ENCODE measurements at regions of chr1 and their contacts with region 1.

Region 1: GRCh38 chr1:92968138-92969032 is 7.1 kb upstream of the DIPK1A start:
- DNase-seq: peak in 4 of 5 donors; percentile 41 to 50 (median 46)
- H3K4me3 ChIP-seq: no peak overlapping the region
- H3K4me3 Mint-ChIP-seq: peak overlapping the region in 1 of 8 donors; percentile 57
- H3K27ac ChIP-seq: no peak overlapping the region
- H3K27ac Mint-ChIP-seq: peak overlapping the region; percentile 6 to 82 (median 49)
- H3K4me1 ChIP-seq: peaks cover 56% of the 10 kb centered on the region
- H3K4me1 Mint-ChIP-seq: peaks cover 16 to 32% (median 23%) of the 10 kb centered on the region in 4 donors
- H3K27me3 ChIP-seq: no peaks in the 10 kb centered on the region
- H3K27me3 Mint-ChIP-seq: no peaks in the 10 kb centered on the region

Region 2: DNA sequence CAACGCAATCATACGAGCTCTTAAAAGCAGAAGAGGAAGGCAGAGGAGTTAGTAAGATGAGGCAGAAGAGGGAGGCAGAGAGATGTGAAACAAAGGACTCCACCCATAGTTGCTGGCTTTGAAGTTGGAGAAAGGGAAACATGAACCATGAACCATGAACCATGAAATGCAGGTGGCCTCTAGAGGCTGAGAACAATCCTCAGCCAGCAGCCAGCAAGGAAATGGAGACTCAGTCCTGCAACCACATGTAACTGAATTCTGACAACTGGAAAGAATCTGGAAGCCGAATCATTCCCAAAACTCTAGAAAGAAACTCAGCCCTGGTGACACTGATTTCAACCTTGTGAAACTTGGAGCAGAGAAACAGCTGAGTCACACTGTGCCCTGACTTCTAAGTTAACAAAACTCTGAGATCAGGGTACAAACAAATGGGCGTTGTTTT is 17.2 kb before region 1 on chr1:
- CTCF ChIA-PET with region 1: interaction called, 52 read pairs
- POLR2A ChIA-PET with region 1: interaction called, 48 read pairs
- intact Hi-C with region 1: no loop called
- DNase-seq: peak in 4 of 5 donors; percentile 33 to 47 (median 39)
- H3K4me3 ChIP-seq: no peak overlapping the region
- H3K4me3 Mint-ChIP-seq: no peak overlapping the region
- H3K27ac ChIP-seq: peak overlapping the region; percentile 23
- H3K27ac Mint-ChIP-seq: no peak overlapping the region
- H3K4me1 ChIP-seq: peaks cover 59% of the 10 kb centered on the region
- H3K4me1 Mint-ChIP-seq: peaks cover 27 to 47% (median 31%) of the 10 kb centered on the region in 4 donors
- H3K27me3 ChIP-seq: no peaks in the 10 kb centered on the region
- H3K27me3 Mint-ChIP-seq: no peaks in the 10 kb centered on the region

Region 3: GRCh38 chr1:92980732-92981647 is 12.6 kb after region 1 on chr1:
- CTCF ChIA-PET with region 1: interaction called, 81 read pairs
- POLR2A ChIA-PET with region 1: interaction called, 244 read pairs
- intact Hi-C with region 1: loop called (anchors 1 kb)
- DNase-seq: peak; percentile 81 to 91 (median 87)
- H3K4me3 ChIP-seq: no peak overlapping the region
- H3K4me3 Mint-ChIP-seq: peak overlapping the region; percentile 32 to 86 (median 72)
- H3K27ac ChIP-seq: peak overlapping the region; percentile 77
- H3K27ac Mint-ChIP-seq: peak overlapping the region; percentile 88 to 99 (median 99)
- H3K4me1 ChIP-seq: peaks cover 58% of the 10 kb centered on the region
- H3K4me1 Mint-ChIP-seq: peaks cover 23 to 43% (median 35%) of the 10 kb centered on the region in 4 donors
- H3K27me3 ChIP-seq: no peaks in the 10 kb centered on the region
- H3K27me3 Mint-ChIP-seq: no peaks in the 10 kb centered on the region

Region 4: DNA sequence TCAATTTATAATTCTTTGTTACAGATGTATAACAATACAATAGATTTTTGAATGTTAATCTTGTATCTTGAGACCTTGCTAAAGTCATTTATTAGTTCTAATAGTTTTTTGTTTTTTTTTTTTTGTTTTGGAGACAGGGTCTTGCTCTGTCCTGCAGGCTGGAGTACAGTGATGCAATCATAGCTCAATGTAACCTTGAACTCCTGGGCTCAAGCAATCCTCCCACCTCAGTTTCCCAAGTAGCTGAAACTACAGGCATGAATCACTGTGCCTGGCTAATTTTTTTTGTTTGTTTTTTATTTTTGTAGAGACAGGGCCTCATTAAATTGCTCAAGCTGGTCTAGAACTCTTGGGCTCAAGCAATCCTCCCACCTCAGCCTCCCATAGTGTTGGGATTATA is 19.1 kb after region 1 on chr1:
- CTCF ChIA-PET with region 1: interaction called, 433 read pairs
- POLR2A ChIA-PET with region 1: interaction called, 244 read pairs
- intact Hi-C with region 1: no loop called
- DNase-seq: no peak
- H3K4me3 ChIP-seq: no peak overlapping the region
- H3K4me3 Mint-ChIP-seq: no peak overlapping the region
- H3K27ac ChIP-seq: no peak overlapping the region
- H3K27ac Mint-ChIP-seq: no peak overlapping the region
- H3K4me1 ChIP-seq: peaks cover 41% of the 10 kb centered on the region
- H3K4me1 Mint-ChIP-seq: peaks cover 31 to 40% (median 33%) of the 10 kb centered on the region in 4 donors
- H3K27me3 ChIP-seq: no peaks in the 10 kb centered on the region
- H3K27me3 Mint-ChIP-seq: no peaks in the 10 kb centered on the region